Activated T-helper 1 cell treated with anti-CD3 and anti-CD28 coated beads, Interleukin-12 subunit alpha, Interleukin-12 subunit beta, Interleukin-2, Interleukin-4 antibody, amounts not matched to agents 30 ng/mL and 10 ng/mL and 1 ng/mL, durations not matched to agents 14 hours and 24 hours and 36 hours (primary cell): ENCODE measurements at regions of chr15 and their contacts with region 1.

Region 1: GRCh38 chr15:99921101-99921500 is 187.9 kb upstream of the LYSMD4 start:
- DNase-seq: no peak
- H3K4me3 Mint-ChIP-seq: no peak overlapping the region
- H3K27ac Mint-ChIP-seq: no peak overlapping the region
- H3K4me1 Mint-ChIP-seq: no peaks in the 10 kb centered on the region
- H3K27me3 Mint-ChIP-seq: peaks cover 29% of the 10 kb centered on the region

Region 2: GRCh38 chr15:99818872-99819271 is 102.2 kb before region 1 on chr15:
- intact Hi-C with region 1: loop called (anchors 5 kb)
- DNase-seq: no peak
- H3K4me3 Mint-ChIP-seq: no peak overlapping the region
- H3K27ac Mint-ChIP-seq: no peak overlapping the region
- H3K4me1 Mint-ChIP-seq: no peaks in the 10 kb centered on the region
- H3K27me3 Mint-ChIP-seq: no peaks in the 10 kb centered on the region

Region 3: GRCh38 chr15:99932676-99933402 is 11.7 kb after region 1 on chr15:
- intact Hi-C with region 1: no loop called
- DNase-seq: no peak
- H3K4me3 Mint-ChIP-seq: no peak overlapping the region
- H3K27ac Mint-ChIP-seq: no peak overlapping the region
- H3K4me1 Mint-ChIP-seq: peaks cover 14% of the 10 kb centered on the region
- H3K27me3 Mint-ChIP-seq: peaks cover 21% of the 10 kb centered on the region